ENCODE measurements at regions of chr18 and their contacts with region 1.

Region 1: DNA sequence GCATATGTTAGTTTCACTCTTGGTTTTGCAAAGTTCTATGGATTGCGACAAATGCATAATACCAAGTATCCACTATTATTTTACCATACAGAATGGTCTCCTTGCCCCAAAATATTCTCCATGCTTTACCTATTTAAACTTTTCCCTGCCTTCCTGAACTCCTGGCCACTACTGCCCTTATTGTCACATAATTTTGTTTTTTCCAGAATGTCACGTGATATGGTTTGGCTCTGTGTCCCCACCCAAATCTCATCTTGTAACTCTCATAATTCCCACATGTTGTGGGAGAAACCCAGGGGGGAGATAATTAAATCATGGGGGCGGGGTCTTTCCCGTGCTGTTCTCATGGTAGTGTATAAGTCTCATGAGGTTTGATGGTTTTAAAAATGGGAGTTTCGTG is 760.0 kb downstream of the METTL4 start:
- DNase-seq: no peak
- H3K4me3 ChIP-seq: no peak overlapping the region
- H3K27ac ChIP-seq: no peak overlapping the region
- H3K4me1 ChIP-seq: no peaks in the 10 kb centered on the region
- H3K27me3 ChIP-seq: no peaks in the 10 kb centered on the region
- CTCF ChIP-seq: no peak
- POLR2A ChIP-seq: no peak

Region 2: DNA sequence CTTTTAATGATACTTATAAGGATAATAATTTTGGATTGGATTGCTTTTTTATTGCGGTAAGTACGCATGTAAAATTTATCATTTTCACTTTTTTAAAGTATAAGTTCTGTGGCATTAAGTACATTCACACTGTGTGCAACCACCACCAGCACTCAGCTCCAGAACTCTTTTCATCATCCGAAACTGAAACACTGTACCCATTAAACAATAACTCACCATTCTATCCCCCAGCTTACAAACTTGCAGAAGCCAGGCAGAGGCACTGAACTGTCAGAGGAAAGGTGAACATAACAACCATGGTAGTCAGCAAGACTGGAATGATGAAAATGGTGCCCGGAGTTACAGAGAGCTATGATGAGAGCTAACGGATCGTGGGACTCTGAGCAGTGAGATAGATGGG is 440.7 kb before region 1 on chr18:
- intact Hi-C with region 1: no loop called
- DNase-seq: no peak
- H3K4me3 ChIP-seq: no peak overlapping the region
- H3K27ac ChIP-seq: no peak overlapping the region
- H3K4me1 ChIP-seq: no peaks in the 10 kb centered on the region
- H3K27me3 ChIP-seq: no peaks in the 10 kb centered on the region
- CTCF ChIP-seq: no peak
- POLR2A ChIP-seq: no peak

Region 3: DNA sequence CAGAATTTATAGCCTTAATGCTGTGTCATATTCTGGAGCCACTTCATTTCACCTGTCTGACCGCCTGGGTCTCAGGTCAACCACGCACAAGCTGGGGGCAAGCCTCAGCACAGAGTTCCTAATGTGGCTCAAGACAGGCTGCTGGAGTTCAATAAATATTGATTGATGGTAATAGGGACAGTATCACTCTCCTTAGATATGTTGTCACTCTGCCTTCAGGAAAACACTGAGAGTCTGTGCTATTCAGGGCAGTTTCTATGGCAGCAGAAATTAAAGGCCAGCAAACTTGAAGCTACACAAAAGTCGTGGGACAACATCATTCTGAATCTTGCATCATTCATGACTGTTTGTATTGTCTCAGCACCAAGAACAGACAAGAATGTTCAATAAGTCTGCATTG is 63.9 kb after region 1 on chr18:
- intact Hi-C with region 1: loop called in 1 of 2 experiments (anchors 10 kb)
- DNase-seq: no peak
- H3K4me3 ChIP-seq: no peak overlapping the region
- H3K27ac ChIP-seq: no peak overlapping the region
- H3K4me1 ChIP-seq: no peaks in the 10 kb centered on the region
- H3K27me3 ChIP-seq: no peaks in the 10 kb centered on the region
- CTCF ChIP-seq: no peak
- POLR2A ChIP-seq: no peak